Calu3 (cell line): ENCODE measurements at regions of chr19 and their contacts with region 1.

Region 1: DNA sequence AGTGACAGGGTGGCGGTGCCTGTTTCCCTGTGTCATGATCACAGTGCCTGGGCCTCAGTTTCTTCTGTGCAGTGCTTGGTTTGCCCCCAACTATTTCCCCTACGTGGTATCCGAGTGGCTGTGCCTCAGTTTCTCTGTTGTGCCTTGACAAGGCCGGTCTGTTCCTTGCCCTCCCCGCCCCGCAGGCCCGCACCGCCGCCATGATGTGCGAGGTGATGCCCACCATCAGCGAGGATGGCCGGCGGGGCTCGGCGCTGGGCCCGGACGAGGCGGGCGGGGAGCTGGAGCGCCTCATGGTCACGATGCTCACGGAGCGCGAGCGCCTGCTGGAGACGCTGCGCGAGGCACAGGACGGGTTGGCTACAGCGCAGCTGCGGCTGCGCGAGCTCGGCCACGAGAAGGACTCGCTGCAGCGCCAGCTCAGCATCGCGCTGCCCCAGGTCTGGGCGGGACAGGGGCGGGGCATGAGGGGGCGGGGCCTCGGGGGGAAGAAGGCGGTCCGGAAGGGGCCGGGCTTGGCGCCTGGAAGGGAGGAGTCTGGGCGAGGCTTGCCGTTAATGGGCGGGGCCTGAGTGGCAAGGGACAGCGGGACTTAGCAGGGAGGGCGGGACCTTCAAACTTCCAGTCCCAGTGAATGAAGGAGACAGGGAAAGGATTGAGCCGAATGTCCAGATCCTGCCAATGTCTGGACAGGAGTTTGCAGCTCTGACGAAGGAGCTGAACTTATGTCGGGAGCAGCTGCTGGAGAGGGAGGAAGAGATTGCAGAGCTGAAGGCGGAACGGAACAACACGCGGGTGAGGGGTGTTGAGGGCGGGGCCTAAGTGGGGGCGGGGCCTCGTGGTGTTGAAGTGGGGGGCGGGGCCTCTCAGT is 8.6 kb downstream of the PPFIA3 start:
- DNase-seq: peak; percentile 99
- H3K4me3 Mint-ChIP-seq: peak overlapping the region; percentile 60
- H3K27ac Mint-ChIP-seq: peak overlapping the region; percentile 55
- H3K4me1 Mint-ChIP-seq: peaks cover 13% of the 10 kb centered on the region
- H3K27me3 Mint-ChIP-seq: peaks cover under 1% of the 10 kb centered on the region
- CTCF ChIP-seq: peak; percentile 24

Region 2: GRCh38 chr19:49111218-49111998 is 16.5 kb before region 1 on chr19:
- CTCF ChIA-PET with region 1: interaction called, 11 read pairs
- intact Hi-C with region 1: no loop called
- DNase-seq: no peak
- H3K4me3 Mint-ChIP-seq: no peak overlapping the region
- H3K27ac Mint-ChIP-seq: no peak overlapping the region
- H3K4me1 Mint-ChIP-seq: peaks cover 16% of the 10 kb centered on the region
- H3K27me3 Mint-ChIP-seq: no peaks in the 10 kb centered on the region
- CTCF ChIP-seq: no peak

Region 3: GRCh38 chr19:49165111-49165750 is 37.3 kb after region 1 on chr19:
- CTCF ChIA-PET with region 1: interaction called, 7 read pairs
- intact Hi-C with region 1: loop called (anchors 1 kb)
- DNase-seq: no peak
- H3K4me3 Mint-ChIP-seq: no peak overlapping the region
- H3K27ac Mint-ChIP-seq: no peak overlapping the region
- H3K4me1 Mint-ChIP-seq: peaks cover 10% of the 10 kb centered on the region
- H3K27me3 Mint-ChIP-seq: no peaks in the 10 kb centered on the region
- CTCF ChIP-seq: no peak

Region 4: DNA sequence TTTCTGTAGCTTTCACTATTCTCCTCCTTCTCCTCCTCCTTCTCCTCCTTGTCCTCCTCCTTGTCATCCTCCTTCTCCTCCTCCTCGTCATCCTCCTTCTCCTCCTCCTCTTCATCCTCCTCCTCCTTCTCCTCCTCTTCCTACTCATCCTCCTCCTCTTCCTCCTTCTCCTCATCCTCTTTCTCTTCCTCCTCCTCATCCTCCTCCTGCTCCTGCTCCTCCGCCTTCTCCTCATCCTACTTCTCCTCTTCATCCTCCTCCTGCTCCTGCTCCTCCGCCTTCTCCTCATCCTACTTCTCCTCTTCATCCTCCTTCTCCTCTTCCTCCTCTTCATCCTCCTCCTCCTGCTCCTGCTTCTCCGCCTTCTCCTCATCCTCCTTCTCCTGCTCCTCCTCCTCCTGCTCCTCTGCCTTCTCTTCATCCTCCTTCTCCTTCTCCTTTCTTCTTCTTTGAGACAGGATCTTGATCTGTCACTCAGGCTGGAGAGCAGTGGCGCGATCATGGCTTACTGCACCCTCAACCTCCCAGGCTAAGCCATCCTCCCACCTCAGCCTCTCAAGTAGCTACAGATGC is 66.0 kb after region 1 on chr19:
- CTCF ChIA-PET with region 1: interaction called, 11 read pairs
- intact Hi-C with region 1: no loop called
- DNase-seq: no peak
- H3K4me3 Mint-ChIP-seq: no peak overlapping the region
- H3K27ac Mint-ChIP-seq: no peak overlapping the region
- H3K4me1 Mint-ChIP-seq: no peaks in the 10 kb centered on the region
- H3K27me3 Mint-ChIP-seq: no peaks in the 10 kb centered on the region
- CTCF ChIP-seq: no peak